ENCODE measurements at regions of chr4 and their contacts with region 1.

Region 1: DNA sequence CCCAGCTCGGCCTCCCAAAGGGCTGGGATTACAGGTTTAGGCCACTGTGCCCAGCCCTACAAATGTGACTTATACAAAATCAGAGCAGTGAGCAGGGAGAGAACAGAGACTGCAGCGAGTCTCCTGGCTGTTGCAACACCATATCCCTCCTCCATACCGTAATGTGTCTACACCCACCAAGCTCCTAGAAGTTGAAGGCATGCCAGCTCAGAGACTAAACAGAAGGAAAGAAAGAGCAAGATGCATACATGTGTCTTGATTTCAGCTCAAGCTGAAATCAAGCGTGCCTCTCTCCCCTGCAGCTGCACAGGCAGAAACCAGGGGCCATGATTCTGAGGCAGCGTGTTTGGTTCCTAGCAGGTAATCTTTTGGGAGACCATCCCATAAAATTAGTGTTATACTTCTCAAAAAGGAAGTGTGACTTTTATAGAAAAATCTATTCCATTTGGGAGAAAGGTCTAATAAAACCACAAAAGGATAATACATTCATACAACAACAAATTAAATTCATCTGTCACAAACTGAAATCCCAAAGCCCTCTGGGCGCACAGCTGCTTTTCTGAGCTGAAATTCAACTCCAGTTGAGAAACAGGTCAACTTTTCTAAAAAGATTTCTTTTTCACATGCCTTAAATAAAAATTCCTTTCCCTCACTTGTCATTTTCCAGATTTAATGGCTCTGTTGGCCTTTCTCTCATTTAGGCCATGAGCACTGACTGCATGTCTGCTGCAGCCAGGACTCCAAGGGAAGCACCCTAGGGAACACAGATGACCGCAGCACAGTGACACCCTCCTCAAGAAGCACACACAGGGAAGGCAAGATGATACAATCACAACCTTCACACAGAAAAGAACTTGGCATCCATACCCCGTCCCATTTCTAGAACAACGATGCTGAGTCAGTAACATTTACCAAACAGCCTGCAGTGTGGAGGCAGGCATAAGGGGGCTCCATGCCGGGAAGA is 34.4 kb downstream of the AFAP1 start:
- DNase-seq: peak; percentile 94
- ATAC-seq: peak; percentile 63
- H3K4me3 ChIP-seq: no peak overlapping the region
- H3K27ac ChIP-seq: peak overlapping the region; percentile 80
- H3K4me1 ChIP-seq: peaks cover 49% of the 10 kb centered on the region
- H3K27me3 ChIP-seq: no peaks in the 10 kb centered on the region
- CTCF ChIP-seq: no peak
- POLR2A ChIP-seq: 0 out of 2 replicates have a peak, but pooled peaks have one; percentile 16
- RAD21 ChIP-seq: no peak

Region 2: GRCh38 chr4:7867701-7868435 is 37.4 kb before region 1 on chr4:
- CTCF ChIA-PET with region 1: no interaction called
- POLR2A ChIA-PET with region 1: no interaction called
- dilution Hi-C with region 1: no loop called
- in situ Hi-C with region 1: no loop called
- intact Hi-C with region 1: loop called (anchors 2 kb)
- DNase-seq: peak; percentile 73
- ATAC-seq: peak; percentile 58
- H3K4me3 ChIP-seq: no peak overlapping the region
- H3K27ac ChIP-seq: peak overlapping the region; percentile 74
- H3K4me1 ChIP-seq: peaks cover 30% of the 10 kb centered on the region
- H3K27me3 ChIP-seq: no peaks in the 10 kb centered on the region
- CTCF ChIP-seq: no peak
- POLR2A ChIP-seq: no peak
- RAD21 ChIP-seq: peak; percentile 15; the same call in 1 of the 2 replicates

Region 3: DNA sequence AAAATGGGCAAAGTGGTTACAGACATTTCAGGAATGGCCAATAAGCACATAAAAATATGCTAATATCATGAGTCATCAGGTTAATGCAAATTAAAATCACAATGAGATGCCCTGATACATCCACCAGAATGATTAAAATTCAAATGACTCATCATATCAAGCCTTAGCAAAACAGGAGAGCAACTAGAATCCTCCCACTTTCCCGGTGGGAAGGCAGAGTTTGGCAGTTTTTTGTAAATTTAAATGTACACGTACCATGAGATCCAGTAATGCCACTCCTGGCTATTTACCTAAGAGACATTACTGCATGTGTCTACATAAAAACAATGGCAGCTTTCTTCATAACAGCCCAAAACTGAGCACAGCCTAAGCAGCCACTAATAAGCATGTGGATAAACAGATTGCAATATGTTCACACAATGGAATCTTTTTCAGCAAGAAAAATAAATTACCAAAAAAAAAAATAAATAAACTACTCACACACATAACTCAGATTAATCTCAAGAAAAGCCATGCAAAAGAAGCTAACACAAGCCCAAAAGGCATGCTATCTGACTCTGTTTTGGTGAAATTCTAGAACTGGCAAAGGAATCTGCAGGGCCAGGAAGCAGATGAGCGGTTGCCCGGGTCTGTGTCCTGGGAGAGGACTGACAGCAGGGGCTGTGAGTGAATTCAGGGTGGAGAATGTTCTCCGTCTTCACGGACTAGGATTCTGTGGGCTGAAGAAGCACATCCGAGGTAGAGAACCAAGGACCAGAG is 14.4 kb before region 1 on chr4:
- CTCF ChIA-PET with region 1: no interaction called
- POLR2A ChIA-PET with region 1: no interaction called
- dilution Hi-C with region 1: no loop called
- in situ Hi-C with region 1: no loop called
- intact Hi-C with region 1: no loop called
- DNase-seq: peak; percentile 92
- ATAC-seq: peak; percentile 50
- H3K4me3 ChIP-seq: no peak overlapping the region
- H3K27ac ChIP-seq: peak overlapping the region; percentile 99
- H3K4me1 ChIP-seq: peaks cover 27% of the 10 kb centered on the region
- H3K27me3 ChIP-seq: no peaks in the 10 kb centered on the region
- CTCF ChIP-seq: no peak
- POLR2A ChIP-seq: no peak
- RAD21 ChIP-seq: no peak